Naive thymus-derived CD4-positive, alpha-beta T cell (primary cell): ENCODE measurements at regions of chr15 and their contacts with region 1.

Region 1: GRCh38 chr15:69729161-69729748 is 276.6 kb downstream of the RPLP1 start:
- DNase-seq: peak; percentile 38 to 79 (median 61)
- ATAC-seq: peak; percentile 53
- H3K4me3 ChIP-seq: no peak overlapping the region
- H3K4me3 Mint-ChIP-seq: no peak overlapping the region
- H3K27ac ChIP-seq: no peak overlapping the region
- H3K27ac Mint-ChIP-seq: peak overlapping the region in 3 of 9 donors; percentile 5 to 22 (median 19)
- H3K4me1 ChIP-seq: peaks cover 0 to 12% of the 10 kb centered on the region in 2 donors
- H3K4me1 Mint-ChIP-seq: peaks cover 13 to 64% (median 23%) of the 10 kb centered on the region in 7 donors
- H3K27me3 ChIP-seq: no peaks in the 10 kb centered on the region
- H3K27me3 Mint-ChIP-seq: peaks cover 0 to 30% (median 0%) of the 10 kb centered on the region in 5 donors

Region 2: GRCh38 chr15:69951907-69952555 is 222.8 kb after region 1 on chr15:
- CTCF ChIA-PET with region 1: no interaction called
- POLR2A ChIA-PET with region 1: no interaction called
- intact Hi-C with region 1: loop called in 1 of 2 experiments (anchors 10 kb)
- DNase-seq: no peak
- ATAC-seq: no peak
- H3K4me3 ChIP-seq: no peak overlapping the region
- H3K4me3 Mint-ChIP-seq: no peak overlapping the region
- H3K27ac ChIP-seq: no peak overlapping the region
- H3K27ac Mint-ChIP-seq: no peak overlapping the region
- H3K4me1 ChIP-seq: no peaks in the 10 kb centered on the region
- H3K4me1 Mint-ChIP-seq: peaks cover 0 to 2% (median 0%) of the 10 kb centered on the region in 7 donors
- H3K27me3 ChIP-seq: no peaks in the 10 kb centered on the region
- H3K27me3 Mint-ChIP-seq: peaks cover 0 to 16% (median 0%) of the 10 kb centered on the region in 5 donors

Region 3: GRCh38 chr15:70395164-70395563 is 665.9 kb after region 1 on chr15:
- CTCF ChIA-PET with region 1: no interaction called
- POLR2A ChIA-PET with region 1: no interaction called
- intact Hi-C with region 1: no loop called
- DNase-seq: no peak
- ATAC-seq: no peak
- H3K4me3 ChIP-seq: no peak overlapping the region
- H3K4me3 Mint-ChIP-seq: no peak overlapping the region
- H3K27ac ChIP-seq: no peak overlapping the region
- H3K27ac Mint-ChIP-seq: no peak overlapping the region
- H3K4me1 ChIP-seq: no peaks in the 10 kb centered on the region
- H3K4me1 Mint-ChIP-seq: no peaks in the 10 kb centered on the region
- H3K27me3 ChIP-seq: no peaks in the 10 kb centered on the region
- H3K27me3 Mint-ChIP-seq: peaks cover 0 to 42% (median 5%) of the 10 kb centered on the region in 5 donors

Region 4: GRCh38 chr15:70466895-70467529 is 737.8 kb after region 1 on chr15:
- CTCF ChIA-PET with region 1: interaction called, 4 read pairs
- POLR2A ChIA-PET with region 1: no interaction called
- intact Hi-C with region 1: loop called in 1 of 2 experiments (anchors 2 kb)
- DNase-seq: peak in 6 of 9 donors; percentile 20 to 61 (median 54)
- ATAC-seq: peak; percentile 57
- H3K4me3 ChIP-seq: no peak overlapping the region
- H3K4me3 Mint-ChIP-seq: no peak overlapping the region
- H3K27ac ChIP-seq: no peak overlapping the region
- H3K27ac Mint-ChIP-seq: peak overlapping the region in 1 of 9 donors; percentile 3
- H3K4me1 ChIP-seq: no peaks in the 10 kb centered on the region
- H3K4me1 Mint-ChIP-seq: peaks cover 0 to 13% (median 6%) of the 10 kb centered on the region in 7 donors
- H3K27me3 ChIP-seq: no peaks in the 10 kb centered on the region
- H3K27me3 Mint-ChIP-seq: peaks cover 0 to 81% (median 4%) of the 10 kb centered on the region in 5 donors